H1 (cell line): ENCODE measurements at regions of chr4 and their contacts with region 1.

Region 1: DNA sequence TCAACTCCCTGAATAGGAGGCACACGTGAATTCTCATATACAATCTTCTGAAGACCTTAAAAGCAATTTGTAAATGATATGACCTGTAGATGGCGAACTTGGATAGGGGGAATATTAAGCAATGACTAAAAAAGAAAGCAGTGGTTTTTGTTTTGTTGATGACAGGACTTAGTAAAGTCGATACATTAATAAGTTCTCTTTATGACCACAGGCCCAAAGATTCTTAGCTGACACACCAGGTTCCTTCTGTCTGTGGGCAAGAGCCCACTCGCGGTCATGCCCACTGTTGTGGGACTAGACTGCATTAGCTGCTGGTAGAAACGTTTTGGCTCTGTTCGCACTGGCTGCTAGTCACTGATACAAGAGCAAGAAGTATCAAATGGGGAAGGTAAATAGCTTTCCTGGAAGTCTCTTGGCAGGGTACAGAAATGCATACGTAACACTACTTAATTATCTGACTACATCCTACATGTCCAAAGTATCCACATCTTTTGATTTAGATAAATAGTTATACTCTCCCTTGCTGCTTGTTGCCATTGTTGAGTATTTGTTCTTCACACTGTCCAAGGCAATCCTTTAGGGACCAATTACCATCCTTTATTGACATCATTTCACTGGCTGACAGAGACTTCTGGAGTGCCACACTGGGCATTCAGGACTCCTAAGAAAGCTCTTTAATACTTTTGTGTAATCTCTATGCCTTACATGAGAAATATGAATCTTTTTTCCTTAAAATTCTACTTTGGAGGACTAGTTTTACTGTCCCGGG is 31.0 kb downstream of the ALPK1 start:
- DNase-seq: no peak
- H3K4me3 ChIP-seq: no peak overlapping the region
- H3K27ac ChIP-seq: no peak overlapping the region
- H3K4me1 ChIP-seq: peaks cover 0 to 2% (median 0%) of the 10 kb centered on the region in 4 experiments; a peak in 1 of 7 replicates
- H3K27me3 ChIP-seq: no peaks in the 10 kb centered on the region; a peak in 2 of 7 replicates
- CTCF ChIP-seq: peak in 2 of 3 experiments; percentile 38 to 49; a peak in 2 of 4 replicates
- EP300 ChIP-seq: no peak
- POLR2A ChIP-seq: no peak
- RAD21 ChIP-seq: peak; percentile 80 to 84

Region 2: DNA sequence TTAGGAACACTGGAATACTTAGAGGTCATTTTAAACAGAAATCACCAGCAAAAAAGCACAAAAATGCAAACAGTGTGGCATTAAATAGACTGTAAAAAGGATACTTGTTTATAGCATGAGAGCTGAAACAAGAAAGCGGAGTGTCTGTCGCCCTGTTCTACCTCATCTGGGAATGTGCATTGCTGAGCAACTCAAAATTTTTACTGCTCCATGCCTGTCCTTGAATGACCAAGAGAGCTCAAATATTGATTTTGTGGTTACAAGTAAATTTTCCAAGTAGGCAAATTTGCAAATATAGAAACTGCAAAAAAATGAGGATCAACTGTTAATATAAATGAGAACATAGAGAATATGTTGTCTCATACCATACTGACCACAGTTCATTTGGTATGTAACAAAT is 71.1 kb before region 1 on chr4:
- CTCF ChIA-PET with region 1: no interaction called
- POLR2A ChIA-PET with region 1: no interaction called
- DNase-seq: no peak
- H3K4me3 ChIP-seq: no peak overlapping the region
- H3K27ac ChIP-seq: no peak overlapping the region
- H3K4me1 ChIP-seq: peaks cover 0 to 2% (median 0%) of the 10 kb centered on the region in 4 experiments; a peak in 1 of 7 replicates
- H3K27me3 ChIP-seq: no peaks in the 10 kb centered on the region
- CTCF ChIP-seq: no peak
- EP300 ChIP-seq: no peak
- POLR2A ChIP-seq: no peak
- RAD21 ChIP-seq: no peak

Region 3: DNA sequence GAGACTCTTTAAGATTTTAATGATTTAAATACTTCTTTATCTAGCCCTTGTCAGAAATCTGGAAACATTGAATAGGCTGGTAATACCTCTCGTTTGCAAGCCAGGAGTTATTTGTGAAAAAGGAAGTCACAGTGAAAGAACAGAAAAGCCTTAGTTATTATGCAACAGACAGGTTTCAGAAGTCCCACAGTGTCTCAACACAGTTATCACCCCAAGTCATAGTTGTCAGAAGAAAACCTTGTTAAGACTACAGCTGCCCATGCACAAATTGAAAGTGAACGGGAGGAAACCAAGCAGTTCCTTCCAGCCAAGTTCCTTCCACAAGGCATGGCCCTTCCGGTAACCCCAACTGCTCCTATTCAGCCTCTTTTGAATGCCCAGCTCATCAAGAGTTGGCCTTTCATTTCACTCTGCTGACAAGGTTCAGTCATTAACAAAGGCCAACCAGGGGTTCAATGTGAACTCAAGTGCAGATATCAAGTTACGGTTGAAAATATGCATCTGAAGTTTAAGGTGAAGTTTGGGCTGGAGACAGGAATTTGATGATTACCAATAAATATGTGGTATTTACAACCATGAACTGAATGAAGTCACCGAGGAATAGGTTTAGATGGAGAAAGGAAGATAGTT is 15.4 kb before region 1 on chr4:
- CTCF ChIA-PET with region 1: interaction called, 13 read pairs
- POLR2A ChIA-PET with region 1: no interaction called
- DNase-seq: no peak
- H3K4me3 ChIP-seq: no peak overlapping the region
- H3K27ac ChIP-seq: no peak overlapping the region
- H3K4me1 ChIP-seq: peaks cover 0 to 9% (median 2%) of the 10 kb centered on the region in 4 experiments; a peak in 4 of 7 replicates
- H3K27me3 ChIP-seq: no peaks in the 10 kb centered on the region
- CTCF ChIP-seq: no peak
- EP300 ChIP-seq: no peak
- POLR2A ChIP-seq: no peak
- RAD21 ChIP-seq: no peak

Region 4: DNA sequence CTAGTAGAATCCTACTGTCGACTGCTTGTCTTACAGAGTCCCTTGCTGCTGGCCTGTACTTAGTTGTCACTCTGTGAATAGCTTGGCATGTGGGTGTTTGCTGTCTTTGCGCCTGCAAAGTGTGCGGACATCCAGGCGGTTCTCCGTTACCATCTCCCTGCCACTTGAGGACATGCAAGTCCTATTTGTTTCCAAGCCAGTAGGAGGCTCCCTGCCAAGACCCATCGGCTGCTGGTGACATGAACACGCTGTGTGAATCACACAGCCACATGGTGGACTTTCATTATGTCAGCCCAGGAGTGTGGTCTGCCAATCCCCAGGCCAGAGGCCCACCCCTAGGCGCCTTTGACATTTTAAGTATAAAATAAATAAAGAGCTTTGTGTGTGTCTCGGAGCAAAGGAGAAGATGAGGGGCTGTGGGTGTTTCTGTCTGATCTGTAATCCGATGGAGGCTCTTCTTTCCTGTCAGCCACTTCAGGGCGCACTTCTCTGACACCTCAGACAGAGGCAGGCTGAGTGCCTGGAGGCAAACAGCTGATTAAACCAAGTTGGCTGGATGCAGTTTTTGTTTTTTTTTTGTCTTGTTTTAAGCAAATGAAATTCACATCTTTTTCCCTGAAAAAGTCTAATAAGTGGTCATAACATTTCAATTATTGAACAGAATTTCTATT is 20.5 kb after region 1 on chr4:
- CTCF ChIA-PET with region 1: interaction called, 12 read pairs
- POLR2A ChIA-PET with region 1: no interaction called
- DNase-seq: peak in 1 of 2 experiments; percentile 63
- H3K4me3 ChIP-seq: no peak overlapping the region
- H3K27ac ChIP-seq: no peak overlapping the region
- H3K4me1 ChIP-seq: peaks cover 0 to 2% (median under 1%) of the 10 kb centered on the region in 4 experiments; a peak in 3 of 7 replicates
- H3K27me3 ChIP-seq: no peaks in the 10 kb centered on the region
- CTCF ChIP-seq: peak; percentile 60 to 69 (median 64)
- EP300 ChIP-seq: no peak
- POLR2A ChIP-seq: no peak
- RAD21 ChIP-seq: peak; percentile 56 to 67

Region 5: GRCh38 chr4:112386056-112386455 is 57.9 kb after region 1 on chr4:
- CTCF ChIA-PET with region 1: interaction called, 10 read pairs
- POLR2A ChIA-PET with region 1: no interaction called
- DNase-seq: no peak
- H3K4me3 ChIP-seq: no peak overlapping the region
- H3K27ac ChIP-seq: no peak overlapping the region
- H3K4me1 ChIP-seq: no peaks in the 10 kb centered on the region
- H3K27me3 ChIP-seq: no peaks in the 10 kb centered on the region
- CTCF ChIP-seq: no peak
- EP300 ChIP-seq: no peak
- POLR2A ChIP-seq: no peak
- RAD21 ChIP-seq: no peak

Region 6: GRCh38 chr4:112515304-112516067 is 187.3 kb after region 1 on chr4:
- CTCF ChIA-PET with region 1: interaction called, 133 read pairs
- POLR2A ChIA-PET with region 1: no interaction called
- DNase-seq: peak in 1 of 2 experiments; percentile 79
- H3K4me3 ChIP-seq: peak overlapping the region; percentile 16 to 59 (median 36)
- H3K27ac ChIP-seq: no peak overlapping the region
- H3K4me1 ChIP-seq: peaks cover 12 to 36% (median 19%) of the 10 kb centered on the region in 4 experiments
- H3K27me3 ChIP-seq: peaks cover 88 to 100% (median 95%) of the 10 kb centered on the region in 4 experiments
- CTCF ChIP-seq: no peak
- EP300 ChIP-seq: no peak
- POLR2A ChIP-seq: no peak
- RAD21 ChIP-seq: no peak